ENCODE measurements at regions of chr17 and their contacts with region 1.

Region 1: DNA sequence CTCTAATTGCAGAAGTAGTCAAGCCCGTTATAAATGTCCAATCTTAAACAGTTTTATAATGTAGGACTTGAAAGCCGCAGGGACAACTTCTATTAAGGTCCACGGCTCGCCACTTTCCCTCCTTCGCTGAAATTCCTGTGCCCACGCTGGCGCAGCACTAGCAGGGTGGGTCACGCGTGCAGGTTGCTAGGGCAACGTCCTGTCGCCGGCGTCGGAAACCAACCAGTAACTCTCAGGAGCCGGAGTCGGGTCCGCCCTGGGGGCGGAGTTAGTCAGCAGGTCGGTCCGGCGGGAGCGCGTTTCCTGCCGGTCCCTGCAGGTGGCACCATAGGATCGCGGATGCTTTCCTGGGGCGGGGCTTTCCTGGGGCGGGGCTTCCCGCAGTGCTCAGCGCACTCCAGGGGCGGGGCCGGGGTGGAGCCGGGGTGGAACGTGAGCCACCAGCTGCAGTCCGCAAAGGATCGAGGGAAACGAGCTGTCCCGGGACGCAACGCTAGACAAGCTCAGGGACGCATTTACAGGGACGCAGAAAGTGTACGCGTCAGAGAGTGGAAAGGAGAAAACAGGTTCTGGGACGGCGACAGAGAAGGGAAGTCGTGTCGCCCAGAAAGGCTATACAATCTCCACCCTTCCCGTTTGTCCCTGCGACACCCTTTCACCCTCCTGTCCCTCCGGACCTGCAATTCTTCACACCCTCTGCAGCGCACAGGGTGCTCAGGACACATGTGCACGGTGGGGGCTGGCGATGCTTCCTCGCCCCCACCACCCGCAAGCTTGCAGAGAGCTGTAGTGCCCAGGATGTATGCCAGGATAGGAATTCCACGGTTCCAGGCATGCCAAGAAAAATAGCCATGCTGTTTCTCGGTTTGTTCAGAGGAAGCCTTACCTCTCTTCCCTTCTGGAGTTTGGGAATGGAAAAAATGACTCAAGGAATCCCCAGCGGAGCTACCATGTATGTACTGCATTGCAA is 12.4 kb downstream of the COPZ2 start:
- DNase-seq: peak; percentile 95 to 98 (median 96)
- H3K4me3 ChIP-seq: peak overlapping the region; percentile 53 to 81
- H3K4me3 Mint-ChIP-seq: peak overlapping the region; percentile 84 to 96 (median 92)
- H3K27ac ChIP-seq: peak overlapping the region; percentile 32
- H3K27ac Mint-ChIP-seq: peak overlapping the region; percentile 87 to 98 (median 95)
- H3K4me1 ChIP-seq: peaks cover 36% of the 10 kb centered on the region
- H3K4me1 Mint-ChIP-seq: peaks cover 12 to 38% (median 27%) of the 10 kb centered on the region in 4 donors
- H3K27me3 ChIP-seq: no peaks in the 10 kb centered on the region
- H3K27me3 Mint-ChIP-seq: peaks cover 7 to 16% of the 10 kb centered on the region in 2 donors

Region 2: GRCh38 chr17:47949136-47949759 is 76.0 kb before region 1 on chr17:
- CTCF ChIA-PET with region 1: interaction called, 54 read pairs
- POLR2A ChIA-PET with region 1: interaction called, 4 read pairs
- intact Hi-C with region 1: loop called (anchors 5 kb)
- DNase-seq: peak; percentile 59 to 71 (median 63)
- H3K4me3 ChIP-seq: peak overlapping the region in 1 of 2 donors; percentile 51
- H3K4me3 Mint-ChIP-seq: peak overlapping the region; percentile 61 to 91 (median 74)
- H3K27ac ChIP-seq: peak overlapping the region; percentile 37
- H3K27ac Mint-ChIP-seq: peak overlapping the region; percentile 29 to 93 (median 69)
- H3K4me1 ChIP-seq: peaks cover 34% of the 10 kb centered on the region
- H3K4me1 Mint-ChIP-seq: peaks cover 21 to 36% (median 29%) of the 10 kb centered on the region in 4 donors
- H3K27me3 ChIP-seq: no peaks in the 10 kb centered on the region
- H3K27me3 Mint-ChIP-seq: no peaks in the 10 kb centered on the region

Region 3: GRCh38 chr17:48011405-48012150 is 13.6 kb before region 1 on chr17:
- CTCF ChIA-PET with region 1: interaction called, 15 read pairs
- POLR2A ChIA-PET with region 1: interaction called, 3 read pairs
- intact Hi-C with region 1: loop called (anchors 1 kb)
- DNase-seq: peak; percentile 25 to 51 (median 42)
- H3K4me3 ChIP-seq: peak overlapping the region in 1 of 2 donors; percentile 36
- H3K4me3 Mint-ChIP-seq: peak overlapping the region; percentile 76 to 92 (median 84)
- H3K27ac ChIP-seq: no peak overlapping the region
- H3K27ac Mint-ChIP-seq: peak overlapping the region in 3 of 7 donors; percentile 11 to 85 (median 77)
- H3K4me1 ChIP-seq: peaks cover 8% of the 10 kb centered on the region
- H3K4me1 Mint-ChIP-seq: peaks cover 9 to 18% (median 14%) of the 10 kb centered on the region in 4 donors
- H3K27me3 ChIP-seq: peaks cover 11% of the 10 kb centered on the region
- H3K27me3 Mint-ChIP-seq: peaks cover 22 to 42% of the 10 kb centered on the region in 2 donors

Region 4: GRCh38 chr17:48068491-48068961 is 43.3 kb after region 1 on chr17:
- CTCF ChIA-PET with region 1: interaction called, 148 read pairs
- POLR2A ChIA-PET with region 1: interaction called, 5 read pairs
- intact Hi-C with region 1: no loop called
- DNase-seq: no peak
- H3K4me3 ChIP-seq: no peak overlapping the region
- H3K4me3 Mint-ChIP-seq: no peak overlapping the region
- H3K27ac ChIP-seq: no peak overlapping the region
- H3K27ac Mint-ChIP-seq: no peak overlapping the region
- H3K4me1 ChIP-seq: no peaks in the 10 kb centered on the region
- H3K4me1 Mint-ChIP-seq: peaks cover 0 to 1% (median 0%) of the 10 kb centered on the region in 4 donors
- H3K27me3 ChIP-seq: no peaks in the 10 kb centered on the region
- H3K27me3 Mint-ChIP-seq: no peaks in the 10 kb centered on the region

Region 5: GRCh38 chr17:48131216-48131824 is 106.1 kb after region 1 on chr17:
- CTCF ChIA-PET with region 1: interaction called, 10 read pairs
- POLR2A ChIA-PET with region 1: interaction called, 3 read pairs
- intact Hi-C with region 1: loop called (anchors 1 kb)
- DNase-seq: peak; percentile 49 to 59 (median 50)
- H3K4me3 ChIP-seq: no peak overlapping the region
- H3K4me3 Mint-ChIP-seq: no peak overlapping the region
- H3K27ac ChIP-seq: no peak overlapping the region
- H3K27ac Mint-ChIP-seq: peak overlapping the region in 5 of 7 donors; percentile 23 to 87 (median 62)
- H3K4me1 ChIP-seq: no peaks in the 10 kb centered on the region
- H3K4me1 Mint-ChIP-seq: peaks cover 0 to 5% (median 2%) of the 10 kb centered on the region in 4 donors
- H3K27me3 ChIP-seq: no peaks in the 10 kb centered on the region
- H3K27me3 Mint-ChIP-seq: no peaks in the 10 kb centered on the region

Region 6: DNA sequence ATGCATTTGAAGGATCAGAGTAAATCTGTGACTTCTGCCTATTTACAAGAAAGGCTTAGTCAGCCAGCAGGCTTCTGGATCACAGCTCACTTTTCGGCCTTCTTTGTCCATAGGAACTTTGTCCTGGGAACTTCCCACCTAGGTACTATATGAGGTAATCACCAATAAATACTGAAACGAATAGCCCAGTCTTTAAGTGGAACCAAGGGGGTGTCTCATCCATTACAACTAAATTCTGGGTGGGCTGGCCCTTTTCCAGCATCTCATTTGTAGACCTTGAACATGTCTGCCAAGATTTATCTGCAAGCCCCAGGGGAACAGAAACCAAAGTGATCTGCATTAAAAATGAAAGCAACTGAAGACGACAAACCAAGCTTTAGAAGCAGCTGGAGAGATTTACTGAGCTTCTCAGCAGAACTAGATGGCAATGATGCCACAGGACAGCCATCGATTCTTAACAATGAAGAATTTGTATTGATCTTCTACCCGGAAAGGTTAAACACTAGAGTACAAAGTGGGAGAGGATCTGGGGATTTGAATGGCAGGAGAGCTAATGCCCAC is 137.8 kb after region 1 on chr17:
- CTCF ChIA-PET with region 1: no interaction called
- POLR2A ChIA-PET with region 1: no interaction called
- intact Hi-C with region 1: no loop called
- DNase-seq: no peak
- H3K4me3 ChIP-seq: no peak overlapping the region
- H3K4me3 Mint-ChIP-seq: no peak overlapping the region
- H3K27ac ChIP-seq: no peak overlapping the region
- H3K27ac Mint-ChIP-seq: peak overlapping the region in 4 of 7 donors; percentile 19 to 52 (median 44)
- H3K4me1 ChIP-seq: peaks cover 2% of the 10 kb centered on the region
- H3K4me1 Mint-ChIP-seq: peaks cover 0 to 6% (median 4%) of the 10 kb centered on the region in 4 donors
- H3K27me3 ChIP-seq: no peaks in the 10 kb centered on the region
- H3K27me3 Mint-ChIP-seq: no peaks in the 10 kb centered on the region

Region 7: DNA sequence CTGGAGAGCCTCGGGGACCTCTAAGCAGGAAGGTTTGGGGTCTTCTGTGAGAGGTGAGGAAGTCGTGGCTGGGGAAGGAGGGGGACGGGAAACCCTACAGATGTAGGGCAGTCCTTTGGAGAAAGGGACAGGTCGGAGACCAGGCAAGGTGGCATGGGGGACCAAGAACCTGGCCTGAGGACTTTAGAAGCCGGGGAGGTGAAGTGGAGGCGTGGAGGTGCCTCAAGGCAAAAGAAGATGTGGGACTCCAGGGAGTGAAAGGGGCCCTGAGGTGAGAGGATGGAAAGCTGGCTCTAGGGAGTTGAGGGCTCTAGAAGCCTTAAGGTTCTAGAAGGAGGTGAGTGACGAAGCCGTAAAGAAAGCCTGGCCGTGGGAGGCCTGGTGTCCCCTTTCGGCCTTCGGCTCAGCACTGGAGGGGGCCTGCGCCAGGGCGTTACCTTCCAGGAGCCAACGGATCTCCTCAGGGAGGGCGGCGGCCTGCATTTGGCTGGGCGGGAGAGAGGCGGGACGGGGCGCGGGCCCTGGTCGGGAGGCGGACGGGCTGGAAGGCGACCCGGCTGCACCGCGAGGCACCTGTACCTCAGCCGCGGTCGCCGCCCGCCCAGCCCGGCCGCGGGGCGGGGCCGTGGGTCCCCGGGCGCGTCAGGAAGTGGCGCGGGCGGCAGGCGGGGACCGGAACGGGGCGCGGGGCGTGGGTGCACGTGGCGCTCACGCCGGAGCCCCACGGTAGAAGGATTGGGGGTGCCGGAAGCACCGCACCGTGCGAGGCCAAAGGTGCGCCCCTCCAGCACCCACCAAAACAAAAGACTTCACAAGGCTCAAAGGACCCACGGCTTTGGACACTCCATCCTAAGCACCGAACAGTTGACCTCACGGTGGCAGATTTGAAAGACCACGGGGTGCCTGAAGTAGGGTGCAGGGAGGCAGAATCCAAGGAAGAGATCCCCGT is 404.7 kb after region 1 on chr17 and contains the start of gene SKAP1:
- CTCF ChIA-PET with region 1: no interaction called
- POLR2A ChIA-PET with region 1: no interaction called
- intact Hi-C with region 1: no loop called
- DNase-seq: peak; percentile 68 to 76 (median 71)
- H3K4me3 ChIP-seq: peak within 1 kb of the TSS; percentile 90 to 97
- H3K4me3 Mint-ChIP-seq: peak within 1 kb of the TSS; percentile 91 to 99 (median 97)
- H3K27ac ChIP-seq: peak within 1 kb of the TSS; percentile 89
- H3K27ac Mint-ChIP-seq: peak within 1 kb of the TSS; percentile 95 to 99 (median 97)
- H3K4me1 ChIP-seq: peaks cover 69% of the 10 kb centered on the region
- H3K4me1 Mint-ChIP-seq: peaks cover 62 to 97% (median 77%) of the 10 kb centered on the region in 4 donors
- H3K27me3 ChIP-seq: no peaks in the 10 kb centered on the region
- H3K27me3 Mint-ChIP-seq: no peaks in the 10 kb centered on the region
- total RNA-seq, gene SKAP1: 83.4 to 88.7 TPM

Region 8: DNA sequence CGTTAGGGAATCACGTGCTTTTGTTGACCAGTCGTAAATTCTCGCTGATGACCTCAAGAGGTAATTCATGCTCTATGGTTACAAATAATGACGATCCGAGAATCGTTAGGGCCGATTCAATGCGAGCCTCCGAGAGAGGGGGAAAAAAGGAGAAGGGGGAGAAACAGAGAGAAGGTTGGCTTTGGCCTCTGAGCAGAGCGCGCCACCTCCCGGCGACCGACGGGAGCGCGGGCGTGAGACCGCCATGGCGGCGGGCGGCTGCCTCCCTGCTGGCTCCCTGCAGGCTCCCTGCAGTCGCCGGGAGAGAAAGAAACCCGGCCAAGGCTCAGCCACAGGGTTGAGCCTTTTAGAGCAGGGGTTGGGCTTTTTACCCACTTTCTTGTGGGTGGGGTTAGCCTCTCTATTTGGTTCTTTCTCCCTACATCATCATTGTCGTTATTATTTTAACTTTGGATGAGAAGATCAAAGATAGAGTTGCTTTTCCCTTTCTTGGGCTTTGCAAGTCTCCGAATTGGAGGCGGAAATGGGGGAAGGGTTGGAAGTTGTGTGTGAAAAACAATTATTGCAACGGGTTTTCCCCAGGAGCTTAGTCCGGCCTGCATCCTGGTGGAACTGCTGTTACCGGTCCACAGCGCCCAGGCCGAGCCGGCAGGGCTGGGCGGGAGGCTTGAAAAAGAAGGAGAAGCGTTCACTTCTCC is 568.8 kb after region 1 on chr17:
- CTCF ChIA-PET with region 1: interaction called, 4 read pairs
- POLR2A ChIA-PET with region 1: no interaction called
- intact Hi-C with region 1: loop called (anchors 5 kb)
- DNase-seq: peak; percentile 71 to 82 (median 77)
- H3K4me3 ChIP-seq: peak overlapping the region in 1 of 2 donors; percentile 30
- H3K4me3 Mint-ChIP-seq: peak overlapping the region; percentile 80 to 92 (median 82)
- H3K27ac ChIP-seq: no peak overlapping the region
- H3K27ac Mint-ChIP-seq: peak overlapping the region in 1 of 7 donors; percentile 74
- H3K4me1 ChIP-seq: peaks cover 46% of the 10 kb centered on the region
- H3K4me1 Mint-ChIP-seq: peaks cover 23 to 55% (median 43%) of the 10 kb centered on the region in 4 donors
- H3K27me3 ChIP-seq: peaks cover 47% of the 10 kb centered on the region
- H3K27me3 Mint-ChIP-seq: peaks cover 44 to 72% of the 10 kb centered on the region in 2 donors